ENCODE measurements at regions of chr11 and their contacts with region 1.

Region 1: GRCh38 chr11:120985718-120986569 is 38.0 kb upstream of the TBCEL start:
- DNase-seq: peak in 4 of 5 donors; percentile 16 to 76 (median 46)
- ATAC-seq: peak; percentile 20 to 89 (median 82)
- H3K4me3 ChIP-seq: peak overlapping the region; percentile 31 to 65 (median 50)
- H3K27ac ChIP-seq: peak overlapping the region in 3 of 12 donors; percentile 7 to 48 (median 9)
- H3K4me1 ChIP-seq: peaks cover 0 to 16% (median 0%) of the 10 kb centered on the region in 12 donors
- H3K27me3 ChIP-seq: peaks cover 0 to 25% (median 0%) of the 10 kb centered on the region in 9 donors
- CTCF ChIP-seq: peak in 8 of 12 donors; percentile 3 to 45 (median 20)
- POLR2A ChIP-seq: no peak

Region 2: GRCh38 chr11:121032546-121032945 is 46.6 kb after region 1 on chr11:
- intact Hi-C with region 1: loop called in 1 of 10 experiments (anchors 2 kb)
- DNase-seq: no peak
- ATAC-seq: no peak
- H3K4me3 ChIP-seq: no peak overlapping the region
- H3K27ac ChIP-seq: no peak overlapping the region
- H3K4me1 ChIP-seq: peaks cover 0 to 15% (median 0%) of the 10 kb centered on the region in 12 donors
- H3K27me3 ChIP-seq: no peaks in the 10 kb centered on the region
- CTCF ChIP-seq: no peak
- POLR2A ChIP-seq: no peak

Measured in heart left ventricle (tissue), 16 donors.